Heart right ventricle (tissue), 16 donors: ENCODE measurements at regions of chr18 and their contacts with region 1.

Region 1: DNA sequence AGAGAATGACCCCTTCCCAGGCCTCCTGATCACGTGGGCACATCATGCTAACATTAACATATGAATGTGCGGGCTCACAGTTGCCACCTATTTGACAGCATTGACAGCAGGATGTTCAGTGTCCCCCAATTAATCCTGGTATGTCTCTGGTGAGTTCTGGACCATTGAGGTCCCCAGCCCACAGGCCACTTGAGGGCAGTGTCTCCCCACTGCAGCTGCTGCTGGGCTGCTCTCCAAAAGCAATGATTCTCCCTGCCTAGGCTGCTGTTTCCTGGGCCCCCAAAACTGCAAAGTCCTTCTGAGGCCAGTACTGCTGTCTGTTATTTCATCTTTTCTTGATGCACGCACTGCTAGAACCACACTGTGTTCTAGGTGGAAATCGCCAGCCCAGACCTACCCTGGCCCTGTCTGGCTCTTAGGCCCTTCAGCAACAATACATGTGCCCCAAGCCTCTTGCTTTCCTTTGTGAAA is 52.7 kb upstream of the MAPK4 start:
- DNase-seq: peak; percentile 15 to 42
- ATAC-seq: peak in 6 of 8 donors; percentile 73 to 95 (median 90)
- H3K4me3 ChIP-seq: no peak overlapping the region
- H3K27ac ChIP-seq: no peak overlapping the region
- H3K4me1 ChIP-seq: no peaks in the 10 kb centered on the region
- H3K27me3 ChIP-seq: no peaks in the 10 kb centered on the region
- CTCF ChIP-seq: peak; percentile 36 to 75 (median 65)

Region 2: GRCh38 chr18:50569930-50570329 is 62.8 kb after region 1 on chr18:
- intact Hi-C with region 1: no loop called
- DNase-seq: no peak
- ATAC-seq: peak in 1 of 8 donors; percentile 47
- H3K4me3 ChIP-seq: no peak overlapping the region
- H3K27ac ChIP-seq: no peak overlapping the region
- H3K4me1 ChIP-seq: peaks cover 0 to 6% (median 0%) of the 10 kb centered on the region in 9 donors
- H3K27me3 ChIP-seq: peaks cover 0 to 8% (median 0%) of the 10 kb centered on the region in 7 donors
- CTCF ChIP-seq: no peak

Region 3: GRCh38 chr18:50780144-50780543 is 273.0 kb after region 1 on chr18:
- intact Hi-C with region 1: loop called in 9 of 10 experiments (anchors 1 to 5 kb)
- DNase-seq: no peak
- ATAC-seq: no peak
- H3K4me3 ChIP-seq: no peak overlapping the region
- H3K27ac ChIP-seq: no peak overlapping the region
- H3K4me1 ChIP-seq: no peaks in the 10 kb centered on the region
- H3K27me3 ChIP-seq: no peaks in the 10 kb centered on the region
- CTCF ChIP-seq: no peak

Region 4: DNA sequence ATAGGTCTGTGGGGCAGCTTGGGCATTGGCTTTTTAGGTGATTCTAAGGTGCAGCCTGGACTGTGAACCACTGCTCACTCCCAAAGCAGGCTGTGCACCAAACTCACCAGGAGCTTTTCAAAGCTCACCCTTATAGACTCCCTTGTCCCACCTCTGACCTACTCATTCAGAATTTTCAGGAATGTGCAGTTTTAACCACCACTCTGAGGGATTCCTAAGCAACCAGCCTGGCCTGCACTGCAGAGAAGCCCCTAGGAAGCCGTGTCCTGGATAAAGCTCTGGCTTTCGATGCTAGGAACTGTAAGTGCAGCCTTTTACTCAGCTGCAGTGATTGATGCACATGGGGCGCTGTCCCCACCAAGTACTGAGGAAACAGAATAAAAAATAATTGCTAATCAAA is 279.7 kb after region 1 on chr18:
- intact Hi-C with region 1: loop called in 9 of 10 experiments (anchors 1 to 5 kb)
- DNase-seq: no peak
- ATAC-seq: no peak
- H3K4me3 ChIP-seq: no peak overlapping the region
- H3K27ac ChIP-seq: no peak overlapping the region
- H3K4me1 ChIP-seq: no peaks in the 10 kb centered on the region
- H3K27me3 ChIP-seq: no peaks in the 10 kb centered on the region
- CTCF ChIP-seq: no peak

Region 5: DNA sequence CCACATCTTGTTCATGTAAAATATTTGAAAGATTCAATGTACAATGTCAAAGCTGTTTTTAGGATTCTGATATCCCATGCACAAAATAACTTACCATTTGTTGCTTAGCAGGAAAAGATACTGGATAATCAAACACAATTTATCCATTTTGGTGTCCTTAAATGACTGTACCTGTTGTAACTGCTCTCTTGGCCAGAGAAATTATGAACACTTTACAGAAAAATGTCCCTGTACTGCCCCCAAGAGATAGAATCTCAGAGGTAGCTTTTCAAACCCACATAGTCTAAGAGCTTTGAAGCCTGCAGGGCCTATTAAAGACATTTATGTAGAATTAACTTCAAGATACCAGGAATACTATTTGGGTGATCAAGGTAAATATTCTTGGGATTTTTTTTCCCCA is 359.6 kb after region 1 on chr18:
- intact Hi-C with region 1: loop called in 1 of 10 experiments (anchors 5 kb)
- DNase-seq: no peak
- ATAC-seq: peak in 6 of 8 donors; percentile 17 to 90 (median 58)
- H3K4me3 ChIP-seq: no peak overlapping the region
- H3K27ac ChIP-seq: no peak overlapping the region
- H3K4me1 ChIP-seq: peaks cover 0 to 18% (median 0%) of the 10 kb centered on the region in 9 donors
- H3K27me3 ChIP-seq: no peaks in the 10 kb centered on the region
- CTCF ChIP-seq: peak in 6 of 9 donors; percentile 27 to 44 (median 38)